Left cardiac atrium (tissue), 4 donors: ENCODE measurements at regions of chr7 and their contacts with region 1.

Region 1: DNA sequence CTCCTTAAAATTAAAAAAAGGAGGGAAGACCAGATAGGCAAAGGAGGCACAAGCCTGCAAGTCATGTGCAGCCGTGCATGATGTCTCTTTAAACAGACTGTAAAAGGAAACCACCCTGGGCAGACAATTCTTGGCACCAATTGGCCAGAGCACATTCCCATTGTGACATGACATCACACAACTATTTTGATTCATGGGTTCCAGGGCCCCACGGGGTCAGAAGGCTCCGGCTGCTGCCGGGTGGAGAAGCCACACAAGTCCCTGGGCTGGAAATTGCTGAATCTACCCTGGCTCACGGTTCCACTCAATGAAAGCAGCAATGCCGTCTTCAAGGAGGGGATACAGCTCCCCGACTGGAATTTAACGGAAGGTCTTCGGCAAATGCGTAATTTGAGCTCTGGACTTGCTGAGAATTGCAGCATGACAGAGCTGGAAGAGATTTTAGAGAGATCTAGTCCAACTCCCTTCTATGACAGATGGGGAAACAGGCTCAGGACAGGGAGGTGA is 140.5 kb downstream of the PRKAG2 start:
- DNase-seq: peak; percentile 80
- ATAC-seq: peak; percentile 84 to 88

Region 2: DNA sequence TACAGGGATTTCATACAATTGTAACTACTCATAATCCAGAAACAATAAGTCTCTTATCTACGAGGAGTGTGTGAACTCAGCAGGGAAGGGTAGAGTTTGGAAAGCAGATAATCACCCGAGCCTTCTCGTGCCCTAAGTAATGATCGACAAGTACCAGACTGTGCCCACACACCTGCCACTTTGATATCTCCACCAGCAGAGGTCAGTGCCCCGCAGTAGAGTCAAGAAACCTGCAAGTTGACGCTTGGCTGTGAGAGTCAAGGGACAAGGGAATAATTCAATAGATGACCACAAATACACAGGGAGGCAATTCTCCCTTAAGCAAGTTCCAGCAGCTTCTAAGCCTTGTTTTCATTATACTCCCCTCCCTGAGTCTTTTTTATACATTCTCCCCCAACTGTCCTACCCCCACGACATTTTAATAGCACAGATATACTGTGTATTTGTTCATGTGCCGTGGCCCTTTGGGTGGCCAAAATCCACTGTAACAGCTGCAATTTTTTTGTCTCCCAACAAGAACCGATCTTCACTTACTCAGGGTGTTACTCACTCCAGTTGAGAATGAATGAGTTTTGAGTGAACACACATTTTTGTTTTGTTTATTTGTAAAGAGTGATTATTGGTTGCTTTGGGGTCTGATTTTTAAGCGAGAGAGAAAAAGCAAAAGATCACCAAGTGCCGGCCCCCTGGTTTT is 109.9 kb before region 1 on chr7:
- intact Hi-C with region 1: loop called in 1 of 2 experiments (anchors 10 kb)
- DNase-seq: peak; percentile 39
- ATAC-seq: peak; percentile 10 to 20